Activated CD4-positive, alpha-beta memory T cell treated with anti-CD3 and anti-CD28 coated beads for 36 hours (primary cell): ENCODE measurements at regions of chr18 and their contacts with region 1.

Region 1: DNA sequence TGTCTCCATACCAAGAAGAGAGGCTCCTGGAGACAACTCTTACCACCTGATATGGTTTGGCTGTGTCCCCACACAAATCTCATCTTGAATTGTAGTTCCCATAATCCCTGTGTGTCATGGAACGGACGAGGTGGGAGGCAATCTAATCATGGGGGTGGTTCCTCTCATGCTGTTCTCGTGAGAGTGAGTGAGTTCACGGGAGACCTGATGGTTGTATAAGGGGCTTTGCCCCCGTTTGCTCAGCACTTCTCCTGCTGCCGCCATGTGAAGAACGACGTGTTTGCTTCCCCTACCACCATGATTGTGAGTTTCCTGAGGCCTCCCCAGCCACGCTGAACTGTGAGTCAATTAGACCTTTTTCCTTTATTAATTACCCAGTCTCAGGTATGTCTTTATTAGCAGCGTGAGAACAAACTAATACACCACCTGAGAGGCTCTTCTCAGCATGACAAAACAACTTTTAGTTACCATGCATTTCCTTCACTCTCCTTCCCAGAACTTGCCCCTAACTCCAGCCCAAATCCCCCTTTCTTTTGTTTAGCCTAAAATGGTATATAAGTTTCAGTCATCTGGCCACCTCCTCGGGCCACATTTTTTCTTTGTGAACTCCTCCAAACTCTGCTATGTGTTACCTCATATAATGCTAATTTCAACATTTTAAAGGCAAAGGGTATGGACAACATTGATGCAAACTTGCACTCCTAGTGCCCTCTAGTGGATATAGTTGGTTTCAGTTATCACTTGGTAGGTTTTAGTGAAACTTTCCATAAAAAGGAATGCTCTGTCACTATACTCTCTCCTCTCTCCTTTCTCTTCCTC is 58.6 kb upstream of the SLC25A52 start:
- DNase-seq: no peak
- H3K4me3 Mint-ChIP-seq: no peak overlapping the region
- H3K27ac Mint-ChIP-seq: no peak overlapping the region
- H3K4me1 Mint-ChIP-seq: no peaks in the 10 kb centered on the region
- H3K27me3 Mint-ChIP-seq: peaks cover 2% of the 10 kb centered on the region

Region 2: DNA sequence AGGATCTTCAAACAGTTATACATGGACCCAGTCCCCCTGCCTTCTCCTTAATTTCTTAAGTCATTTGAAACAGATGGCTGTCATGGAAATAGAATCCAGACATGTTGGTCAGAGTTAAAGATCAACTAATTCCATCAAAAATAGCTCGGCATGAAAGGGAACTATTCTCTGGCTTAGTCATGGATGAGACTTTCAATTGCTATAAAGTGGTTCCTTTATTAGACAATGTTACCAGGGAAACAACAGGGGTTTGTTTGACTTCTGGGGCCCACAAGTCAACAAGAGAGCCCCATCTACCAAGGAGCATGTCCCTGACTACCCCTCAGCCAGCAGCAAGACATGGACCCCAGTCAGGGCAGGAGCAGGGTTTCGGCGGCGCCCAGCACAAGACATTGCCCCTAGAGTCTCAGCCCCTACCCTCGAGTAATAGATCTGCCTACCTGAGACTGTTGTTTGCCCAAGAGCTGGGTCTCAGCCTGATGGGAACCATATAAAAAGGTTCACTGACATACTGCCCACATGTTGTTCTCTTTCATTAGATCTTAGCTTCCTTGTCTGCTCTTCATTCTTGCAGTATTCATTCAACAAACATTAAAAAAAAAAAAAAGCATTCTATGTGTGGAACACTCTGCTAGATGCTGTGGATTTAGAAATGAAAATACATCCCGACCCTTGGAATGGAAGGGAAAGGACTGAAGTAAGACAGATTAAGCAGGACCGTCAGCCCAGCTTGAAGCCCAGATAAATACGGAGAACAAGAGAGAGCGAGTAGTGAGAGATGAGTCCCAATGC is 223.0 kb before region 1 on chr18:
- CTCF ChIA-PET with region 1: no interaction called
- POLR2A ChIA-PET with region 1: no interaction called
- intact Hi-C with region 1: no loop called
- DNase-seq: no peak
- H3K4me3 Mint-ChIP-seq: no peak overlapping the region
- H3K27ac Mint-ChIP-seq: no peak overlapping the region
- H3K4me1 Mint-ChIP-seq: no peaks in the 10 kb centered on the region
- H3K27me3 Mint-ChIP-seq: peaks cover 8% of the 10 kb centered on the region

Region 3: GRCh38 chr18:31957728-31958127 is 138.4 kb after region 1 on chr18:
- CTCF ChIA-PET with region 1: interaction called, 3 read pairs
- POLR2A ChIA-PET with region 1: no interaction called
- intact Hi-C with region 1: loop called (anchors 2 kb)
- DNase-seq: no peak
- H3K4me3 Mint-ChIP-seq: no peak overlapping the region
- H3K27ac Mint-ChIP-seq: no peak overlapping the region
- H3K4me1 Mint-ChIP-seq: peaks cover 2% of the 10 kb centered on the region
- H3K27me3 Mint-ChIP-seq: no peaks in the 10 kb centered on the region